Panc1 (cell line): ENCODE measurements at regions of chr9 and their contacts with region 1.

Region 1: DNA sequence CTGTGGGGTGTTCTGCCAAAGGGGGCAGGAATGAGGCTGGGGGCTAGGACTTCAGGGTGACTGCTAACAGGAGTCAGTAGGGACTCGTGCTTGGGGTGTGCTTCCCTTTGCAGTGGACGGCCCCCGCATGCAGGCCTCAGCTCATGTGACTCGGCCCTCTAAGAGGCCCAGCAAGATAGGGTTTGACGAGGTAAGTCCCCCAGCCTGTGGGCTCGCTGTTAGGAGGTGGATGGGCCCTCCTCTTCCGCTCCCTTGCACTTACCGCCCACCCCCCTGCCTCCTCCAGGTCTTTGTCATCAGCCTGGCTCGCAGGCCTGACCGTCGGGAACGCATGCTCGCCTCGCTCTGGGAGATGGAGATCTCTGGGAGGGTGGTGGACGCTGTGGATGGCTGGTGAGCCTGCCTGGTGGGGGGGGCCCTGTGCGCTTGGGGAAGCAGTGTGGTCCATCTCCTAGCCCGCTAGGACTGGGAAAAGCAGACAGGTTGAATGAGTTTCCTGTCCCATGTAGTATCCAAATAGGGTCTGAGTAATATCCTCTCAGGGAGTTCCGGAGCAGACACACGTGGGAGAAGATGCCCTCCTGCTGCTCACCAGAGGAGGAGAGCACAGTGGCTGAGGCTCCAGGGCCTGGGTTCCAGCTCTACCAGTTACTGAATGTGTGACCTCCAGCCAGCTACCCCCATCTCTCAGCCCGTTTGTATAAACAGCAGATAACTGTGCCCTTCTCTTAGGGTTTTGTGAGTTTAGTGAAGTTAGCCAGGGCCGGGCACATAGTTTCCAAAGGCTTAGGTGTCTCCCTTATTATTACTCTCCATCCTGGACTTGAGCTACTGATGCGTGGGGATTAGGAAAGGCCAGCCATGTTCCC is 8.2 kb downstream of the CERCAM start:
- DNase-seq: no peak
- ATAC-seq: peak; percentile 53
- H3K4me3 ChIP-seq: no peak overlapping the region
- H3K27ac ChIP-seq: no peak overlapping the region
- H3K4me1 ChIP-seq: no peaks in the 10 kb centered on the region
- H3K27me3 ChIP-seq: no peaks in the 10 kb centered on the region
- CTCF ChIP-seq: no peak

Region 2: GRCh38 chr9:128455849-128456612 is 27.2 kb after region 1 on chr9 and contains the start of gene ODF2:
- CTCF ChIA-PET with region 1: no interaction called
- POLR2A ChIA-PET with region 1: no interaction called
- in situ Hi-C with region 1: no loop called
- intact Hi-C with region 1: no loop called
- DNase-seq: peak; percentile 47
- ATAC-seq: peak; percentile 92
- H3K4me3 ChIP-seq: peak within 1 kb of the TSS; percentile 72 to 76
- H3K27ac ChIP-seq: peak within 1 kb of the TSS; percentile 69; the same call in 1 of the 2 replicates
- H3K4me1 ChIP-seq: peaks cover 5% of the 10 kb centered on the region; the same call in 1 of the 2 replicates
- H3K27me3 ChIP-seq: no peaks in the 10 kb centered on the region
- CTCF ChIP-seq: no peak
- total RNA-seq, gene ODF2: 36.8 TPM

Region 3: GRCh38 chr9:128688512-128689292 is 259.8 kb after region 1 on chr9 and contains the start of gene SET:
- CTCF ChIA-PET with region 1: interaction called, 11 read pairs
- POLR2A ChIA-PET with region 1: no interaction called
- in situ Hi-C with region 1: no loop called
- intact Hi-C with region 1: no loop called
- DNase-seq: no peak
- ATAC-seq: peak; percentile 88
- H3K4me3 ChIP-seq: peak within 1 kb of the TSS; percentile 96 to 97
- H3K27ac ChIP-seq: peak within 1 kb of the TSS; percentile 97
- H3K4me1 ChIP-seq: peaks cover 29% of the 10 kb centered on the region
- H3K27me3 ChIP-seq: no peaks in the 10 kb centered on the region
- CTCF ChIP-seq: no peak
- total RNA-seq, gene SET: 422 TPM